Left lung (tissue), 14 donors: ENCODE measurements at regions of chr10 and their contacts with region 1.

Region 1: GRCh38 chr10:28668363-28669226 is 8.7 kb upstream of the BAMBI start:
- DNase-seq: peak in 3 of 4 donors; percentile 38 to 88 (median 87)
- ATAC-seq: peak; percentile 83
- H3K4me3 ChIP-seq: peak overlapping the region; percentile 17 to 37
- H3K27ac ChIP-seq: peak overlapping the region in 1 of 2 donors; percentile 3
- H3K4me1 ChIP-seq: peaks cover 0 to 14% of the 10 kb centered on the region in 2 donors
- H3K27me3 ChIP-seq: peaks cover 22 to 93% of the 10 kb centered on the region in 2 donors
- CTCF ChIP-seq: no peak

Region 2: GRCh38 chr10:28459453-28460144 is 209.0 kb before region 1 on chr10:
- intact Hi-C with region 1: no loop called
- DNase-seq: no peak
- ATAC-seq: no peak
- H3K4me3 ChIP-seq: no peak overlapping the region
- H3K27ac ChIP-seq: no peak overlapping the region
- H3K4me1 ChIP-seq: no peaks in the 10 kb centered on the region
- H3K27me3 ChIP-seq: no peaks in the 10 kb centered on the region
- CTCF ChIP-seq: no peak

Region 3: DNA sequence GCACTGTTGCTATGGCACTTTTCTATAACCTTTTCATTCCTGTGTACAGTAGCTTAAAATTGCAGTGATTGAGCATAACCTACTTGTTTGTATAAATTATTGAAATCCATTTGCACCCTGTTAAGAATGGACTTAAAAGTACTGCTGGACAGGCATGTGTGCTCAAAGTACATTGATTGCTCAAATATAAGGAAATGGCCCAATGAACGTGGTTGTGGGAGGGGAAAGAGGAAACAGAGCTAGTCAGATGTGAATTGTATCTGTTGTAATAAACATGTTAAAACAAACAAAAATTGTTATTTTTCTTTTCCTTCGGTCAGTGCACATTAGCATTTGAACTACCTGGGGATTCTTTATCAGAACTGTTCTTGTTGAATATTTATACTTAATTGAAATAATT is 48.3 kb before region 1 on chr10:
- intact Hi-C with region 1: no loop called
- DNase-seq: no peak
- ATAC-seq: peak; percentile 52
- H3K4me3 ChIP-seq: no peak overlapping the region
- H3K27ac ChIP-seq: peak overlapping the region in 1 of 2 donors; percentile 24
- H3K4me1 ChIP-seq: peaks cover 0 to 20% of the 10 kb centered on the region in 2 donors
- H3K27me3 ChIP-seq: no peaks in the 10 kb centered on the region
- CTCF ChIP-seq: no peak

Region 4: DNA sequence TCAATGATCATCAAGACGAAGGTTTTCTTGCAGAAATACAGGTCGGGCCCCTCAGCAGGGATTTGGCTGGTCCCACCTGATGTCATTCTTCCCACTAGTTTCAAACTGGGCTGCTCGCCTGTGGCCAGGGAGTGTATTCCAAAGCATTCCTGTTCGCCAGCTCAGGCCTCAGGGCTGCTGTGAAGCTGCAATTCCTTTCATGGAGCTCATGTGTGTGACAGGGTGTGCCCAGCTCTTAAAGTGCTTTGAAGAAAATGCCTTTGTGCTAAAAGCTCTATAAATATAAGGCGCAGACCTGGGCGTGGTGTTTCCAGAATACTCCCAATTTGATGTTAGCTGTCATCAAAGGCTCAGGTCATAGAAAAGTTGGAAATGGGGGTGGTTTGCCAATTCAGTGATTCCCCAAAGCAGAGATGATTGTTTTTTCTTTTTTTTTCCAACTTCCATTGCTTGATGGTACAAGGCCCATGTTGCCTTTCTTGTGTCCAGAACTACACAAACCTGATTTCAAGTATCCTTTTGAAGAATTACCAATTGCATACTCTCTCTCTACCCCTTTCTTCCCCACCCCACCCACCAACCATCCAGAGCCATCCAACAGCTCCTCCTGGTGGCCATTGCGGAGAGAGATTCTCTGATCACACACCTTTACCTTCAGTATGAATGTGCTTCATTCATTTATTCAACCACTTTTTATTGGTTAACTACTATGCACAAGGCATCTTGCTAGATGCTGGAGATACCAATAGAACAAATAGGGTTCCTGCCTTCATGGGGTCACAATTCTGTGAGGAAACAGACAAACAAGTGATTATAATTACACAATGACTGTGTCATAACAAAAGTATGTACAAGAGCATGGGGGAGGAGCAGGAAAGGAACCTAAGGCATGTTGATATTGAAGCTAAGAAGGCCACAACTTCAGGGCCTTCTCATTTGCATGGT is 323.0 kb after region 1 on chr10:
- intact Hi-C with region 1: loop called in 1 of 2 experiments (anchors 5 kb)
- DNase-seq: peak in 2 of 4 donors; percentile 59 to 65
- ATAC-seq: peak; percentile 91
- H3K4me3 ChIP-seq: no peak overlapping the region
- H3K27ac ChIP-seq: no peak overlapping the region
- H3K4me1 ChIP-seq: no peaks in the 10 kb centered on the region
- H3K27me3 ChIP-seq: no peaks in the 10 kb centered on the region
- CTCF ChIP-seq: peak; percentile 42 to 61

Region 5: GRCh38 chr10:29304264-29305030 is 635.9 kb after region 1 on chr10:
- intact Hi-C with region 1: loop called in 1 of 2 experiments (anchors 5 kb)
- DNase-seq: peak in 2 of 4 donors; percentile 78 to 84
- ATAC-seq: peak; percentile 95
- H3K4me3 ChIP-seq: no peak overlapping the region
- H3K27ac ChIP-seq: no peak overlapping the region
- H3K4me1 ChIP-seq: no peaks in the 10 kb centered on the region
- H3K27me3 ChIP-seq: no peaks in the 10 kb centered on the region
- CTCF ChIP-seq: peak; percentile 73 to 77